Activated naive CD4-positive, alpha-beta T cell treated with anti-CD3 and anti-CD28 coated beads for 36 hours (primary cell): ENCODE measurements at regions of chr2 and their contacts with region 1.

Region 1: GRCh38 chr2:237998530-237998929 is 31.7 kb downstream of the UBE2F start:
- DNase-seq: peak; percentile 76
- H3K4me3 Mint-ChIP-seq: peak overlapping the region; percentile 50
- H3K27ac Mint-ChIP-seq: peak overlapping the region; percentile 95
- H3K4me1 Mint-ChIP-seq: peaks cover 64% of the 10 kb centered on the region
- H3K27me3 Mint-ChIP-seq: no peaks in the 10 kb centered on the region

Region 2: DNA sequence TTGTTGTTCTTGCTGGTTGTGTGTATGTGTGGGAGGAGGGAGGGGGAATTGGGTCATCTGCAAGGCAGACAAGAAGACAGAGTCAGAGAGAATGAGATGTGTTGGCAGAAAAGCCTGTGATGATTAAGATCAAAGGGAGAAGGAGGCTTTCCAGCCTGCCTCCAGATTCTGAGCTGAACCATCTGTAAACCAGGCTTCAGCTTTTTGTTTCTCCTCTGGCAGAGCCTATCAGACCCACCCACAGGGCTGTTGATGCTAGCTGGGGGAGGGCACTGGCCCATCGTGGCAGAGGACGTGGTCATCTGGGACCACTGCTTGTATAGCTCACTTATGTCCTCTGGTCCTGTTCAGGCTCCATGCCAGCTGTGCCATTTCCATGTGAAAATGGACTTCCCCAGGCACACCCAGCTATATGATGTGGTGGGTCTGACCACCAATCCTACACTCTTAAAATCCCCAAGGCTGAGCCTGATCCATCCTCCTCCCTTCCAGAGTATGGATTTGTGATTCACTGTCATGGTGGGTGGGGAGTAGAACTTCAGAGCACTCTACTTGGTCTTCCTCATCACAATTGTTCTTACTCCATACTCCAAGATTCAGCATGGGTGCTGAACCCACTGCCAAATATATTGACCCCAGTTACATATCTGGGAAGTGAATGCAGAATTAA is 556.8 kb before region 1 on chr2:
- CTCF ChIA-PET with region 1: no interaction called
- intact Hi-C with region 1: loop called (anchors 5 kb)
- DNase-seq: peak; percentile 60
- H3K4me3 Mint-ChIP-seq: peak overlapping the region; percentile 1
- H3K27ac Mint-ChIP-seq: peak overlapping the region; percentile 81
- H3K4me1 Mint-ChIP-seq: peaks cover 57% of the 10 kb centered on the region
- H3K27me3 Mint-ChIP-seq: no peaks in the 10 kb centered on the region

Region 3: DNA sequence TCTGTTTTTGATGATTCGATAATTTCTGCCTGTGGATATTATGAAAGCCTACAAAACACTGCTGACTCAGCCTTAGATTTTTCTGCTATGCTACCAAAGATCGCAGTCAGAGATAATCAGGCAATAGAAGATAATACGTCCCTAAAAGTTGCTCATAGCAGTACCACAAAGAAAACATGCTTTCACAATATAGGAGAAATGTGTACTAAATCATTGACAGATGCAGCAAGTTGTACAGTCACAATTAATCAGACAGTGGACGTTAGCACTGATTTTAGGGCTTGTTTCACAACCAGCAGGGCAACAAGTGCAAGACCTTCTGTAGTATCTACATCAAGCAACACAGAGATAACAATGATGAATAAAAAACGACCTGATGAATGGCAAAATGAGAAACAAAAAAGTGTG is 180.5 kb before region 1 on chr2:
- CTCF ChIA-PET with region 1: no interaction called
- intact Hi-C with region 1: loop called (anchors 5 kb)
- DNase-seq: no peak
- H3K4me3 Mint-ChIP-seq: no peak overlapping the region
- H3K27ac Mint-ChIP-seq: no peak overlapping the region
- H3K4me1 Mint-ChIP-seq: peaks cover 26% of the 10 kb centered on the region
- H3K27me3 Mint-ChIP-seq: no peaks in the 10 kb centered on the region

Region 4: GRCh38 chr2:238060542-238061314 is 62.2 kb after region 1 on chr2 and contains the start of gene SCLY:
- CTCF ChIA-PET with region 1: no interaction called
- intact Hi-C with region 1: loop called (anchors 1 kb)
- DNase-seq: peak; percentile 99
- H3K4me3 Mint-ChIP-seq: peak within 1 kb of the TSS; percentile 90
- H3K27ac Mint-ChIP-seq: peak within 1 kb of the TSS; percentile 87
- H3K4me1 Mint-ChIP-seq: peaks cover 48% of the 10 kb centered on the region
- H3K27me3 Mint-ChIP-seq: peaks cover 3% of the 10 kb centered on the region
- total RNA-seq, gene SCLY: 46.4 to 46.7 TPM

Region 5: GRCh38 chr2:238077292-238077691 is 78.8 kb after region 1 on chr2:
- CTCF ChIA-PET with region 1: no interaction called
- intact Hi-C with region 1: no loop called
- DNase-seq: no peak
- H3K4me3 Mint-ChIP-seq: no peak overlapping the region
- H3K27ac Mint-ChIP-seq: no peak overlapping the region
- H3K4me1 Mint-ChIP-seq: peaks cover 9% of the 10 kb centered on the region
- H3K27me3 Mint-ChIP-seq: no peaks in the 10 kb centered on the region

Region 6: DNA sequence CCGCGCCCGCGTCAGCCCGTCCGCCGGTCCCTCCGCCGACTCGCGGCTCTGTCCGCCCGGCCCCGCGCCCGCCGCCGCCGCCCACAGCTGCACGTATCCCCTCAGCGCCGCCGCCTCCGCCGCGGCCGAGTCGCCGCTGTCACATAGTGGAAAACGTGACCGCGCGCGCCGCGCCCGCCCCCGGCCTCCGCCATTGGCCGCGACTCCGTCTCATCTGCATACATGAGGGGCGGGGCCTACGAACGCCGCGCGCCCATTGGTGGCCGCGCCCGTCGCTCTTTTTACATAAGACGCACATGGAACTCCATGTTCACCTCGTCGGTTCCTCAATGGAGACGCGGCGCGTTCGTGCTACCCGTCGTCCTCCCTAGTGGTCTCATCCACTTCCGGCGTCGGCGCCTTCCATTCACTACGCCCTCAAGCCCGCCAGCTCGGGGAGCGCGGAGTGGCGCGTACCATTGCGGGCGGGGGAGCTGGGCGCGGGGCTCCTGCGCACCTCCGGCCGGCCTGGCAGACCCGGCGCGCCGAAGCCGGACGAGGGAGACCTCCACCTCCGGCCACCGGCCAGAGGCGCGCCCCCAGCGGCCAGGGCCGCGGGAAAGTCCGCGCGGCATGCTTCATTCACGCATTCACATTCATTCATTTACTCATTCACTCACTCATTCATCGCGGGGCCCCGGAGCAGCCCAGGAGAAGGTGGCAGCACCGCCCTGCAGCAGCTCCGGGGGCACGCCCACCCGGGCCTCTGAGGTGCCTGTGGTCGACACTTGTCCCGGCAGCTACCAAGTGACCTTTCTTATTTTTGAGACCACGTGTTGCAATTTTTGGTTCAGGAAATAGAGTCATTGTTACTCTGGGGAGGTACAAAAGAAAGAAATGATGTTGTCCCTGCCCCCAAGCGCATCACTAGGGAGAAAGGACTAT is 290.4 kb after region 1 on chr2:
- CTCF ChIA-PET with region 1: no interaction called
- intact Hi-C with region 1: loop called (anchors 1 kb)
- DNase-seq: peak; percentile 97
- H3K4me3 Mint-ChIP-seq: peak overlapping the region; percentile 89
- H3K27ac Mint-ChIP-seq: peak overlapping the region; percentile 85
- H3K4me1 Mint-ChIP-seq: peaks cover 36% of the 10 kb centered on the region
- H3K27me3 Mint-ChIP-seq: no peaks in the 10 kb centered on the region